Adrenal gland (tissue), 19 donors: ENCODE measurements at regions of chr3 and their contacts with region 1.

Region 1: DNA sequence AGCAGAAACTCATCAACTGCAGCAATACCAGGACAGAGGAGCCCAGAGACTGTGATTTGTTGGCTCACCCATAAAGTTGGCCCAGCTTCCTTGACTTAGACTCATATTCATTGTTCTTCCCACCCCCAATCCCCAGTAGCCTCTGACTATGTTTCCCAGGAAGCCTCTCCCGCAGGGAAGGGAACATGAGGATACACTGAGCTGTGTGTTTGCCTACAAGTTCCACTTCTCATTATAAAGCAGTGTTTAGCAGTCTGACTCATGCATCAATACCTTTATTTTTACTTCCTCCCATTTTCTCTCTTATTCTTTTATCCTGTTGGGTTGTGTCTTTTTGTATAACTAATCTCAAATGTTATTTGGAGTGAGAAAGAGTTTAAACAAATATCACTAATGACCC is 111.6 kb upstream of the PHLDB2 start:
- DNase-seq: no peak
- H3K4me3 ChIP-seq: no peak overlapping the region
- H3K27ac ChIP-seq: no peak overlapping the region
- H3K4me1 ChIP-seq: no peaks in the 10 kb centered on the region
- H3K27me3 ChIP-seq: no peaks in the 10 kb centered on the region
- CTCF ChIP-seq: no peak
- POLR2A ChIP-seq: no peak

Region 2: GRCh38 chr3:111351334-111351733 is 396.2 kb before region 1 on chr3:
- intact Hi-C with region 1: no loop called
- DNase-seq: no peak
- H3K4me3 ChIP-seq: no peak overlapping the region
- H3K27ac ChIP-seq: no peak overlapping the region
- H3K4me1 ChIP-seq: no peaks in the 10 kb centered on the region
- H3K27me3 ChIP-seq: no peaks in the 10 kb centered on the region
- CTCF ChIP-seq: no peak
- POLR2A ChIP-seq: no peak

Region 3: GRCh38 chr3:111803123-111803593 is 55.7 kb after region 1 on chr3:
- intact Hi-C with region 1: loop called in 1 of 2 experiments (anchors 10 kb)
- DNase-seq: peak; percentile 40 to 85 (median 64)
- H3K4me3 ChIP-seq: no peak overlapping the region
- H3K27ac ChIP-seq: peak overlapping the region in 4 of 5 donors; percentile 45 to 82 (median 74)
- H3K4me1 ChIP-seq: peaks cover 23 to 30% of the 10 kb centered on the region in 2 donors
- H3K27me3 ChIP-seq: no peaks in the 10 kb centered on the region
- CTCF ChIP-seq: no peak
- POLR2A ChIP-seq: no peak

Region 4: GRCh38 chr3:112056451-112056978 is 309.0 kb after region 1 on chr3:
- intact Hi-C with region 1: no loop called
- DNase-seq: no peak
- H3K4me3 ChIP-seq: no peak overlapping the region
- H3K27ac ChIP-seq: no peak overlapping the region
- H3K4me1 ChIP-seq: no peaks in the 10 kb centered on the region
- H3K27me3 ChIP-seq: peaks cover 3% of the 10 kb centered on the region
- CTCF ChIP-seq: no peak
- POLR2A ChIP-seq: no peak